Endothelial cell of umbilical vein (primary cell): ENCODE measurements at regions of chr17 and their contacts with region 1.

Region 1: DNA sequence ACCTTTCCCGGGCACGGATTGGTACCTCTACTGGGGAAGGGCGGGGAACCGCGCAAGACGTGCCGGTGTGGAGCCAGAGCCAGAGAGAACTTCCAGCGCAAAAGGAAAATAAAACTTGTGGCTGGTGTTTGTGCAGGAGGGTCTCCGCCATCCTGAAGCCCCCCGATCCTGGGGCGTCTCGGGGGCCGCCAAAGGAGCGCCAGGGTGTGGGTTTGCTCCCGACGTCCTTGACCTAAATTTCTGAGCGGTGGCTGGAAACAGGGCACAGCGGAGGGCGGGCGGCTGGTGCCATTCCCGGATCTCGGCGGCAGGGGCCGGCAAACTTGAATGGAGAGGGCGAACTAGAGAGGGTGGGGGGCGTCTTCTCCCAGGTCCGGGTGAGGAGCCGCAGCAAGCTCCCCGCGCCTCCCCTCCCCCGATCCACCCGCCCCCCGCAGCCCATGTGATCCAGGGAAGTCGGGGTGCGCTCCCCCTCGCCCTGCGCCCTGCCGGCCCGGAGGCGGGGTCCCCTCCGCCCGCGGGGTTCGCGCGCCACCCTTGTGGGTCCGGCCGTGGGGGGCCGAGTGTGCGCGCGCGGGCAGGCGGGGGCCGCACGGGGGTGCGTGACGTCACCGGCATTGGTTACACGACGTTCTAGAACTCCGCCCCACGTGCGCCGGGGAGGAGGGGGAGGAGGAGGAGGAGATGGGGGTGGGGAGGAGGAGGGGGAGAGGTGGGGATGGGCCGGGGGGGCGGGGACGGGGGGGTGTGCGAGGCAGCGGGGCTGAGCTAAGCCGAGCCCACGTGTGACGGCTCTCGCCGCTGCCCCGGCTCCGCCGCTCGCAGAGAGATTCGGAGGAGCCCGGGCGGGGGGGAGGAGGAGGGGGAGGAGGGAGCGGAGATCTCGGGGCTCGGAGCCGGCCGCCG is at the start of gene MSI2:
- DNase-seq: peak; percentile 59
- H3K4me3 ChIP-seq: peak within 1 kb of the TSS; percentile 85 to 99 (median 97)
- H3K27ac ChIP-seq: peak within 1 kb of the TSS; percentile 21
- H3K4me1 ChIP-seq: peaks cover 12% of the 10 kb centered on the region
- H3K27me3 ChIP-seq: peaks cover 0 to 2% of the 10 kb centered on the region in 2 experiments
- CTCF ChIP-seq: no peak
- POLR2A ChIP-seq: no peak
- total RNA-seq, gene MSI2: 59.3 and 62.7 TPM in 2 replicates

Region 2: GRCh38 chr17:56926701-56927590 is 329.1 kb before region 1 on chr17:
- CTCF ChIA-PET with region 1: no interaction called
- POLR2A ChIA-PET with region 1: no interaction called
- dilution Hi-C with region 1: no loop called
- intact Hi-C with region 1: no loop called
- DNase-seq: no peak
- H3K4me3 ChIP-seq: no peak overlapping the region
- H3K27ac ChIP-seq: no peak overlapping the region
- H3K4me1 ChIP-seq: peaks cover 7% of the 10 kb centered on the region
- H3K27me3 ChIP-seq: no peaks in the 10 kb centered on the region
- CTCF ChIP-seq: no peak
- POLR2A ChIP-seq: no peak

Region 3: DNA sequence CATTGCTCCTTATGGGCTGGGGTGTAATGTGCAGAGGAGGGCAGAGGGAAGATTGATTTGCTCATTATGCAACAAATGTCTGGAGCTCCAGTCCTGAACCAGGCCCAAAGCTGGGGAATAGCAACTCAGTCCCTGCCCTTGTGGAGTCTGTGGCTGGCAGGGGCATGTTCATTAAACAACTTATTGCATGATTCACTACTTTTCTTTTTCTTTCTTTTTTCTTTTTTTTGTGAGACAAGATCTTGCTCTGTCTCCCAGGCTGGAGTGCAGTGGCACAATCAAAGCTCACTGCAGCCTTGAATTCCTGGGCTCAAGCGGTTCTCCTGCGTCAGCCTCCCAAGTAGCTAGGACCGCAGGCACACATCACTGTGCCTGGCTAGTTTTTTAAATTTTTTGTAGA is 23.4 kb after region 1 on chr17:
- CTCF ChIA-PET with region 1: no interaction called
- POLR2A ChIA-PET with region 1: no interaction called
- dilution Hi-C with region 1: no loop called
- intact Hi-C with region 1: no loop called
- DNase-seq: no peak
- H3K4me3 ChIP-seq: no peak overlapping the region
- H3K27ac ChIP-seq: no peak overlapping the region
- H3K4me1 ChIP-seq: peaks cover 6% of the 10 kb centered on the region
- H3K27me3 ChIP-seq: no peaks in the 10 kb centered on the region
- CTCF ChIP-seq: no peak
- POLR2A ChIP-seq: no peak

Region 4: GRCh38 chr17:57294629-57295535 is 38.9 kb after region 1 on chr17:
- CTCF ChIA-PET with region 1: no interaction called
- POLR2A ChIA-PET with region 1: interaction called, 3 read pairs
- dilution Hi-C with region 1: no loop called
- intact Hi-C with region 1: loop called (anchors 1 kb)
- DNase-seq: peak; percentile 4
- H3K4me3 ChIP-seq: peak overlapping the region in 1 of 3 experiments; percentile 16
- H3K27ac ChIP-seq: peak overlapping the region; percentile 83
- H3K4me1 ChIP-seq: peaks cover 22% of the 10 kb centered on the region
- H3K27me3 ChIP-seq: no peaks in the 10 kb centered on the region
- CTCF ChIP-seq: no peak
- POLR2A ChIP-seq: no peak

Region 5: GRCh38 chr17:57379237-57379894 is 123.3 kb after region 1 on chr17:
- CTCF ChIA-PET with region 1: no interaction called
- POLR2A ChIA-PET with region 1: no interaction called
- dilution Hi-C with region 1: no loop called
- intact Hi-C with region 1: loop called (anchors 5 kb)
- DNase-seq: peak; percentile 67
- H3K4me3 ChIP-seq: no peak overlapping the region
- H3K27ac ChIP-seq: peak overlapping the region; percentile 33
- H3K4me1 ChIP-seq: peaks cover 5% of the 10 kb centered on the region
- H3K27me3 ChIP-seq: no peaks in the 10 kb centered on the region
- CTCF ChIP-seq: no peak
- POLR2A ChIP-seq: no peak

Region 6: DNA sequence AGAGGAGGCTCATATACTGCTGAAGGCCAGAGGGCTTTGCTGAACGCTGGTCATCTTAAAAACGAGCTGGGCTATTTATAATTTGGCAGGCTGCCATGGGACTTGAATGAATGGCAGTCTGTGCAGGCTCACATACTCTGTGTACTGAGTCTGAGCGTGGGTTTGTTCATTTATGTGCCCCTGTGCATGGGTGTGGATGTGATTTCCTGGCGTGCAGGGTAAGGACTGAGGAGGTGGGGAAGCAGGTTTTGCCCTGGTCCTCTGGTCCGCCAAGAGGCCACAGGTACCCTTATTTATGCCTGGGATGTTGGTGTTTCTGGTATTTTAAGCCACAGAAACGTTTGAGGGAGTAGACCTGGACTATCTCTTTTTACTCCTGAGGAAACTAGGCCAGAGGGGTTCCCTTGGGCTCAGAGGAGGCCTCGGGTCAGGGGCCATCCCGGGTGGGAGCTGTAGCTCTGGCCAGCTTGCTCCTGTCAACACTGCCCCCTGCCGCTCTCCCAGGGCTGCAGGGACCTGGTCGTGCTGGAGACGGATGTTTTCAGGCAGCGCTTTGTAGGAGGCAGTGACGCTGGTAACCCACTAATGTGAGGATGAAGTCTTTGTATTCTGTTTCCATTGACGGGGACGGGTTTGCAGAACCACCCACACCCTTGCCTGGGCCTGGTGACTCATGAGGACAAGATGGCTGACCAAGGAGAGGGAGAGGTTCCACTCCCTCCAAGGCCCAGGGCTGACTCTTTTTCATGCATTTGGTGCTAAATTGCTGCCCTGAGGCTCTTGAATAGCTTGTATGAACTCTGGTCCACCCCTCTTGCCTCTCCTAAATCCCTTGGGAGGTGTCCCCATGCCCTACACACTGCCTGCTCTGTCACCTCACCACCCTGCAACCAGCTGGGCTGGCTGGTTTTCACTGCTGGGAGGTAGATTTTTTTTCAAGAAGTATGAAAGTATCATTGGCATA is 184.8 kb after region 1 on chr17:
- CTCF ChIA-PET with region 1: interaction called, 10 read pairs
- POLR2A ChIA-PET with region 1: no interaction called
- dilution Hi-C with region 1: no loop called
- intact Hi-C with region 1: loop called (anchors 5 kb)
- DNase-seq: peak; percentile 55
- H3K4me3 ChIP-seq: no peak overlapping the region
- H3K27ac ChIP-seq: no peak overlapping the region
- H3K4me1 ChIP-seq: peaks cover 21% of the 10 kb centered on the region
- H3K27me3 ChIP-seq: no peaks in the 10 kb centered on the region
- CTCF ChIP-seq: peak; percentile 43 to 58
- POLR2A ChIP-seq: no peak

Region 7: DNA sequence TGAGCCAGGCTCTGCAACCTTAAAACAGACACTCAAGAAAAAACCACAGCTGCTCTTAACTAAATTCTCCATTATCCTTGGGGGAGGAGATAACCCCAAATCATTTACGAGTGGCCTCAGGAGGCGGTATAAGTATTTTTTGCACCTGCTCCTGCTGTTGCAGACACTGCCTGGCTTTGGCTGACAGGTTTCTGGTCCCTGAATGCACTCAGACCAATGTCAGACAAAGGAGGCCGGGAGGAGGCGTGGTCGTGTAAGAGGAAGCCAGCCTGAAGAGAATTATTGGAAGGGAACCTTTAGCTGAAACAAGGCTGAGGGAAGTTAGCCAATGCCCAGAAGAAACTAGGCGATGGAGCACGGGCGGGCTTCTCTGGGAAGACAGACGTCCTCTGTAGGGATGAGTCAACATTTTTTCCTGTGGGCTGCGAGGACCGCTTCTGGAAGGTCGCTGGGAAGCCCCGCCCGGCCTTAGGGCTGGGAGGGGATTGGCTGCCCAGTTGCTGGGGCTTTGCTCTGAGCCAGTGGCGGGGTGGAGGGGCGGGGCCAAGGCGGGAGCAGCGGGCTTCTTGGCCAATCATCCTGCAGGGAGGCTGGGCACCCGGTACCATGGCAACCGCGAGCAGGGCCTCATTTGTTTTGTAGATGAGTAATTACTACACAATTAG is 406.7 kb after region 1 on chr17:
- CTCF ChIA-PET with region 1: no interaction called
- POLR2A ChIA-PET with region 1: no interaction called
- dilution Hi-C with region 1: no loop called
- intact Hi-C with region 1: loop called (anchors 5 kb)
- DNase-seq: peak; percentile 98
- H3K4me3 ChIP-seq: peak overlapping the region in 2 of 3 experiments; percentile 5 to 32
- H3K27ac ChIP-seq: peak overlapping the region; percentile 87
- H3K4me1 ChIP-seq: peaks cover 13% of the 10 kb centered on the region
- H3K27me3 ChIP-seq: no peaks in the 10 kb centered on the region
- CTCF ChIP-seq: no peak
- POLR2A ChIP-seq: no peak